Activated CD4-positive, alpha-beta T cell treated with anti-CD3 and anti-CD28 coated beads for 36 hours (primary cell): ENCODE measurements at regions of chr20 and their contacts with region 1.

Region 1: DNA sequence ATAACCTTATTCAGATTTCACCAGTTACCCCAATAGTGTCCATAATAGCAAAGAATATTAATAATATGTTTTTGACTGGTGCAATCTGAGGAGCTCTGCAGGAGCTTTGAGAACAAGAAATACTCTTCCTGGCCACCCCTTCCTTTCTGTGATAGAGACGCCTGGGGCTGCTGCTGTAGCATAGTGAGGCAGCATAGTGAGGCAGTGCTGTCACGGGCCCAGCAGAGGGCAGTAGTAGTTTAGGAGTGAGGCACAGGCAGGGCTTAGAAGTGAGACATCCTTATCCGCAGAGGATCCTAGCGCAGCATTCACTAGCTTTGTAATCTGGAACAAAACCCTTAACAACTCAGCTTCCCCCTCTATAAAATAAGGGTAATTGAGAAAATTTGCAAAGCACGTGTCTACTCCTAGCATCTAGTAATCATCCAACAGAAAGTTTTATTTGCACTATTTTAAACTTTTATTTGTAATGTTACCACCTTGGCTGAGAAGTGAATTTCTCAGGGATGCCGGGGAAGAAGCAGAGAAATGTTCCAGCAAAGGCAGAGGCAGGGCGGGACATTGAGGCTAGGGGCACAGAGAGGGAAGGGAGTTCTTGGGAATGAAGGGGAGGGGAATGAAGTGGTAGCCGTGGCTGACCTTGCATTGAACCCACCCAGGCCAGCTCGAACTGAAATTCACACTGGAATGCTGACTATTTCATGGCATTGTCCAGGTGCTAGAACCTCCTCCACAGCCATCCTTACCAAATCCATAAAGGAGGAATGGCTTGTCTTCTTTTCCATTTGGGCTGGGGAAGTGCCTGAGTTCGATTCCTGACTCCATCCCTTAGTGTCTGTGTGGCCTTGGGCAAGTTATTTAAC is 78.8 kb downstream of the CDS2 start:
- DNase-seq: peak; percentile 83
- ATAC-seq: peak; percentile 100
- H3K4me3 Mint-ChIP-seq: no peak overlapping the region
- H3K27ac Mint-ChIP-seq: no peak overlapping the region
- H3K4me1 Mint-ChIP-seq: no peaks in the 10 kb centered on the region
- H3K27me3 Mint-ChIP-seq: no peaks in the 10 kb centered on the region

Region 2: DNA sequence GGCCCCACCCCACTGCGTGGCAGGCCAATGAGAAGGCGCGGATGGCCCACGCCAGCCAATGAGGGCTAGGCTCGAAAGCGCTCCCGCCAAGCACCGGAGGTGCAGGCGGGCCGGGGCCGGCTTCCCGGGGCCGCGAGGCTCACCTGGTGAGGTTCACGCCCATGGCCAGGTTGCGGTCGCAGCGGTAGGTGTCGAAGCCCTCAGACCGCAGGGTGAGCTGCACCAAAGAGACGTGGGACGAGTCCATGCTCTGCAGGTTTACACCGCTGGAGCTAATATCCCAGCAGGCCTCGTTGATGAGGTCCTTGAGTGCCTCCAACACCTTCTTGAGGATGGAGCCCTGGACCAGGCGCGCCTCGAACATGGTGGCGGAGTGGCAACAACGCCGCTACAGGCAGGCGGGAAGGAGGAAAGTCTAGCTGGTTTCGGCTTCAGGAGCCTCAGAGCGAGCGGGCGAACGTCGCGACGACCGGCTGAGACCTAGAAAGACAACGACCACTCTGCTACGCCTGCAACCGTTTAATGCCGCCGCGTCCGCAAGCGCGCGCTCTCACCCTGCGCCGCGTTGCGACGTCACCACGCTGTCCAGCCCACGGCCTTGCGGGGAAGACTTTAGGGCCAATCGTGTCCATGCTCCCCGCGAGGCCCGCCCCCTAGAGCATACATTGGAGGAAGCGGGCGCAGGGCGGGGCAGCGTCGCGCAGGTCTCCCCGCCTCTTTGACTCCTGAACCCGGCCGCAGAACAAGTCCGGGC is 86.0 kb before region 1 on chr20 and contains the start of gene PCNA:
- CTCF ChIA-PET with region 1: no interaction called
- POLR2A ChIA-PET with region 1: no interaction called
- intact Hi-C with region 1: no loop called
- DNase-seq: peak; percentile 99
- ATAC-seq: peak; percentile 91
- H3K4me3 Mint-ChIP-seq: peak within 1 kb of the TSS; percentile 92
- H3K27ac Mint-ChIP-seq: peak within 1 kb of the TSS; percentile 98
- H3K4me1 Mint-ChIP-seq: peaks cover 42% of the 10 kb centered on the region
- H3K27me3 Mint-ChIP-seq: no peaks in the 10 kb centered on the region
- total RNA-seq, gene PCNA: 494 to 576 TPM

Region 3: DNA sequence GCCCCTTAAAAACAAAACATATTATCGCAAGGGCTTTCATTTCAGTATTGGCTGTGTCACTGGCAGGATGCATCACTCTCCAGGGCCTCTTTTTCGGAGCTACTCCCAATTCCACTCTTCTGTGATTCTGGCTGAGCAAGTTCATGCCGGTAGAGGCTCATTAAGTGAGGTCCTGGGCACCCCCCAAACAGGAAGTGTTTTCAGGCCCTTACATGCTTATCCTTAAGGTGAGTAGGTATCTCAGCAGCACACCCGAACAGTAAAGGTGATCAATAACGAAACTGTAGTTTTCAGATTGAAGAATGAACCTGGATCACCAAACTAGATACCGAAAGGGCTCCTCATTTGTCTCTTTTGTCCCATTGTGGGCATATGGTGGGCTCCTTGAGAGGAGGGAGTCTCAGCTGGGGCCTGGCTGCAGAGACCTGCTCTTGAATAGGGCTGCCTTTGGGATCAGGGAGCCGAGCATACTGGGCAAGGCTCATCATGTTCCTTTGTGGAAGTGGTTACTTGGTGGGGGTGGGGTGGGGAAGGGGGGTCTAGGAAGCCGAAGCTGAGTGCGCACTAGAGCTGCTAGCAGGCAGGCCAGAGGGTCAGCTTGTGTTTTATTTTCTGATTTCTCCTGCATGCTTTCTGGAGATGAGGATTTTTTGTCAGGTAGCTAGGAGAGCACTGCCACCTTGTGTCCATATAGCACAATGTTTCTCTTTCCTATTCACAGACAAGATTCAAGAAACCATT is 13.6 kb before region 1 on chr20:
- CTCF ChIA-PET with region 1: interaction called, 20 read pairs
- POLR2A ChIA-PET with region 1: interaction called, 5 read pairs
- intact Hi-C with region 1: no loop called
- DNase-seq: peak; percentile 46
- ATAC-seq: peak; percentile 79
- H3K4me3 Mint-ChIP-seq: no peak overlapping the region
- H3K27ac Mint-ChIP-seq: peak overlapping the region; percentile 80
- H3K4me1 Mint-ChIP-seq: peaks cover 19% of the 10 kb centered on the region
- H3K27me3 Mint-ChIP-seq: no peaks in the 10 kb centered on the region

Region 4: DNA sequence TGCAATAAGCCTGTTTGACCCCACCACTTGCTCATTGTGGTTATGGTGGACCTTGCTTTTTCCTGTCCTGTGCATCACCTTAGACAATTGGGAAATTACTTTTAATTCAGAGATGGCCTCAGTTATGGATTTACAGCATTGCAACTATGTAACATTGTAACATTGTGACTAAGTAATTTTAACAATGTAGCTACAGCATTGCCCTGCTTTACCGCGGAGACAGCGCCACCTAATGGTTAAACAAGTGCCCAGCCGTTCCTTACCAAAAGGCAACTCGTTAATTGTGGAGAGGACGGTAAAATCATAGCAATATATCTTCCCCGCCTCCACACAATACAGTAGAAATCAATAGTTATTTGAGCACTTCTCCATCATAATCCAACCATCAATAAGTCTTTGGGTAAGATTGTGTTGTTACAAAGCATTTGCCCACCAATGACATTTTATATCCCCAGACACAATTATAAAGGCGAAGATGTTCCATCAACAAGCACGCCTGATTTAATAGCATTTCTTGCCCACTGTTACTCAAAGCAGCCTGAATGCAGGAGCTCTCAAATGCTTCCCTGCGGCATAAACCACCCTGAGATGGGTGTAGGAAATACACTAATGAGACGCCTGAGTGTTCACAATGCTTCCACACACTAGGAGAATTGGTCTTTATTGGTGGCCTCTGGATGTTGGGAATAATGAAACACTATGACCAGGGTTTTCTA is 17.5 kb after region 1 on chr20:
- CTCF ChIA-PET with region 1: interaction called, 106 read pairs
- POLR2A ChIA-PET with region 1: no interaction called
- intact Hi-C with region 1: loop called in 1 of 2 experiments (anchors 1 kb)
- DNase-seq: peak; percentile 80
- ATAC-seq: peak; percentile 75
- H3K4me3 Mint-ChIP-seq: no peak overlapping the region
- H3K27ac Mint-ChIP-seq: no peak overlapping the region
- H3K4me1 Mint-ChIP-seq: no peaks in the 10 kb centered on the region
- H3K27me3 Mint-ChIP-seq: peaks cover 2% of the 10 kb centered on the region

Region 5: DNA sequence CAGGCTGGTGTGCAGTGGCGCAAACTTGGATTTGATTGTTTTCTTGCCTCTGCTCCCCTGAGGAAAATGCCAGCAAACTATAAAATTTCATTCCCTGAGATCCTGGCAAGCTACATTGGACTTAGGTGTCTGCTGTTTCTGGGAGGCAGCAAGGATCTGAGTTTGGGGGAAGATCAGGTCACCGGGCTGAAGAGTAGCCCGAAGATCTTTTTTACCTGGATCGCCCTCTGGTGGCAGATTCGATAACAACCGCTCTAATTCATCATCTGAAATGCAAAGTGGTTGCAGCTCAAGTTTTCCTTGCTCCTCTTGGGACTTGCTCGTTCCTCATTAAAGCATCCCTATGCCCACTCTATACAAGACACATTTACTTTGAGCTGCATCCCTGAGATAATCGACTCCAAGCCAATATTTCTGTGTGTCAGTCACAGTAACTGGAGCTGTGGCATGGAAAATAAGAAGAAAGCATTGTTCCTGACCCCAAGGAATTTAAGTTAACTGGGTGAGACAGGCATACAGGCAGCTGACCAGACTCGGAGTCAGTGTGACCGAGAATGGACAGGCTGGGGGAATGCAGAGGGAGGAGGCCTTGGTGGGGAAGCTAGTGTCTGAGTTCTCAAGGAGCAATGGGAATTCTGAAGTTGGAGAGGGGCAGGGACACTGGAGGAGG is 243.0 kb after region 1 on chr20:
- CTCF ChIA-PET with region 1: interaction called, 34 read pairs
- POLR2A ChIA-PET with region 1: no interaction called
- intact Hi-C with region 1: loop called (anchors 1 kb)
- DNase-seq: peak; percentile 73
- ATAC-seq: no peak
- H3K4me3 Mint-ChIP-seq: no peak overlapping the region
- H3K27ac Mint-ChIP-seq: no peak overlapping the region
- H3K4me1 Mint-ChIP-seq: no peaks in the 10 kb centered on the region
- H3K27me3 Mint-ChIP-seq: peaks cover 17% of the 10 kb centered on the region